GM12878 (cell line): ENCODE measurements at regions of chr19 and their contacts with region 1.

Region 1: DNA sequence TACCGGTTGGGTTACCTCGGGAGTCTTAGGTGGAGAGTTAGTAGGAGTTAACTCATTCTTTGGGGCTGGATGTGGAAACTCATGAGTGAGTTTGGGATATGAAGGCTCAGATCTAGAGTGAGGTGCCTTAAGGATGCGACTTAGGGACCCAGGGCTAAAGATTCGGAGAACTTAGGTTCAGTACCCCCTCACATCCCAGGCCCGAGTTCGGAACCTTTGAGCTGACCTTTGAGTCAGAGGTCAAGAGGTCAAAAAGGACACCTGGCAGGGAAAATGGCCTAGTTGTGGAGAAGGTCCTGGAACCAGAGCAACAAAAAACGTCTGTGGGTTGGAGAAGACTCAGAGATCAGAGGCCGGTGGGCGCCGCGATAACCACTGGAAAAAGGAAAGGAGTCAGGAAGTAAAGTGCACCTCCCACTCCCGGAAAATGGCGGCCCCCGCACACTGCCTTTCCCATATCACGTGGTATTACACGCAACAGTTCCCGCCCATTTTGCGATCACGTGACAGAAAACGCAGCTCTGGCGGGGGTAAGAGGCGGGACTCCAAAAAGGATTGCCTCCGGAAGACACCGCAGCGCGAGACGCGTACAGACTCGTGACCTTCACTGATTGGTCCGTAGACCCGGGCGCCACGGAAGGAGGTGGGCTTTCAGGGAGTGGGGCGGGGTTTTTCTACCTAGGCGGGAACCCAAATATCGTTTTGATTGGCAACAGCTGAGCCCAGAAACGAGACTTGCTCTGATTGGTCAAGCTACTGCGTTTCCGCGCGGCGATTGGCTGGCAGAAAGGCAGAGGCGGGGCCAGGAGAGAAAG is at the start of gene ACTMAP:
- DNase-seq: peak; percentile 99
- ATAC-seq: peak; percentile 88
- H3K4me3 ChIP-seq: peak within 1 kb of the TSS; percentile 94
- H3K27ac ChIP-seq: peak within 1 kb of the TSS; percentile 98
- H3K4me1 ChIP-seq: peaks cover 16% of the 10 kb centered on the region
- H3K27me3 ChIP-seq: no peaks in the 10 kb centered on the region
- CTCF ChIP-seq: no peak
- EP300 ChIP-seq: peak in 1 of 2 experiments; percentile 55; a peak in 1 of 4 replicates
- POLR2A ChIP-seq: peak; percentile 57; the same call in 1 of the 2 replicates
- RAD21 ChIP-seq: no peak
- polyA plus RNA-seq, gene ACTMAP: 4.7 to 8.2 TPM

Region 2: DNA sequence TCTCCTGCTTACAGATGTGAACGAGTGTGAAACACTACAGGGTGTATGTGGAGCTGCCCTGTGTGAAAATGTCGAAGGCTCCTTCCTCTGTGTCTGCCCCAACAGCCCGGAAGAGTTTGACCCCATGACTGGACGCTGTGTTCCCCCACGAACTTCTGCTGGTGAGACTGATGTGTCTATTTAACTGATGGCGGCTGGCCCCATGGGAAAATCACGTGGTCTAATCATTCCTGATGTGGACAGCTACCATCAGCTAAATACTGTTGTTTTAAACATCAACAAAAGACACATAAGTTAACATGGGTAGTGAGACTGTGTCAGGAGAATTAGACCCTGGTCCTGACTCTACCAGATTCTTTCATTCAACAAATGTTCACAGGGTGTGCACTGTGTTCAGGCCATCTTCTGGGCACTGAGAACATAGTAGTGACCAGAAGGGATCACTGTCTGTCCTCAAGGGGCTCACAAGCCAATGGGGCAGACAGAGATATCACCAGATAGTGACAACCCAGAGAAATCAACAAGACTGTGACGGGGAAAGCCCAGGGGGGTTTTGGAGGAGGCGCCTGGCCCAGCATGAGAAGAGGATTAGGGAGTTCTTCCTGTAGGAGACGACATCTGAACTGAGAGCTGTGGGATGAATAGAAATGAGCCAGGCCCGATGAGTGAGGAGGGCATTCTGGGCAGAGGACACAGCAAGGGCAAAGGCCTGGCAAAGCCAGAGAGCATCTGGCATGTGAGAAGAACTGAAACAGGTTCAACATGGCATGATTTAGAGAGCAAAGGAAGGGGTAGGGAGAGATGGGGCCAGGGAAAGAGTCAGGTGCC is 130.7 kb before region 1 on chr19:
- CTCF ChIA-PET with region 1: no interaction called
- POLR2A ChIA-PET with region 1: no interaction called
- RAD21 ChIA-PET with region 1: no interaction called
- SMC1A ChIA-PET with region 1: no interaction called
- in situ Hi-C with region 1: no loop called
- intact Hi-C with region 1: no loop called
- DNase-seq: no peak
- ATAC-seq: peak; percentile 80
- H3K4me3 ChIP-seq: no peak overlapping the region
- H3K27ac ChIP-seq: peak overlapping the region; percentile 48
- H3K4me1 ChIP-seq: peaks cover 4% of the 10 kb centered on the region; the same call in 1 of the 2 replicates
- H3K27me3 ChIP-seq: no peaks in the 10 kb centered on the region
- CTCF ChIP-seq: no peak
- EP300 ChIP-seq: no peak
- POLR2A ChIP-seq: no peak
- RAD21 ChIP-seq: no peak

Region 3: DNA sequence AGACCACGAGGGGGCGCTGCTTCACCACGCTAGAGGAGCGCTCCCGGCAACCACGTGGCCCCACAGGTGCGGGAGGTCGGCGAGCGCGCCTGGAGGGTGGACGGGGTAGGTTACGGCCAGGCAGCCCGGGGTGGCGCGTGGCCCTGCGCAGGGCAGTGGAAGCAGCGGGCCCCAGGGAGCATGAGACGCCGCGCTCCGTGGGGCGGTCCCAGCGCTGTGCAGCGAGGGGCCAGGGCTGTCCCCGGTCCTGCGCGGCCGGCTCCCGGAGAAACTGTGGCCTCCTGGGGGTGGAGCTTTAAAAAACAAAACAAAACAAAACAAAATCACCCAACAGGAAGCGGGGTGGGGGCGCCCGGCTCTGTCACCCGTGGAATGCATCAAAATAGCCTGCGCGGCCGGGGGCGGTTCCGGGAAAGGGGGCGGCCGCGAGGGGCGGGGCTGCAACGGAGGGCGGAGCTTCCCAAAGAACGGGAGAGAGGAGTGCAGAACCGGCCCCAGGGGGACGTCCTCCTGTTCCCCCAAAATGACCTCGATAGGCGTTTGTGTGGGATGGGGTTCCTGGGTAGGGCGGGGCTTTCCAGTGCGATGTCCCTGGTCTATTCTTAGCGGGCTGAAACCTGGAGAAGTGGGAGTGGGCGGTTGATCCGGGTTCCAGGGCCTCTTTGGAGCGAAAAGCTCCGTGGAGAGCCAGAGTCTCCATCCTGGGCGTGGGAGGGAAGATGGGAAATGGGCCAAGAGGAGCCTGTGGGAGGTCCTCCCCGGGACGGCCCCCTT is 87.2 kb before region 1 on chr19:
- CTCF ChIA-PET with region 1: interaction called, 5 read pairs
- POLR2A ChIA-PET with region 1: interaction called, 4 read pairs
- RAD21 ChIA-PET with region 1: interaction called, 11 read pairs
- SMC1A ChIA-PET with region 1: interaction called, 6 read pairs
- in situ Hi-C with region 1: no loop called
- intact Hi-C with region 1: loop called (anchors 5 kb)
- DNase-seq: peak; percentile 24
- ATAC-seq: peak; percentile 97
- H3K4me3 ChIP-seq: peak overlapping the region; percentile 83
- H3K27ac ChIP-seq: no peak overlapping the region
- H3K4me1 ChIP-seq: peaks cover 6% of the 10 kb centered on the region
- H3K27me3 ChIP-seq: no peaks in the 10 kb centered on the region
- CTCF ChIP-seq: peak in 2 of 3 experiments; percentile 94 to 95; a peak in 5 of 6 replicates
- EP300 ChIP-seq: no peak
- POLR2A ChIP-seq: peak; percentile 68
- RAD21 ChIP-seq: peak; percentile 90

Region 4: DNA sequence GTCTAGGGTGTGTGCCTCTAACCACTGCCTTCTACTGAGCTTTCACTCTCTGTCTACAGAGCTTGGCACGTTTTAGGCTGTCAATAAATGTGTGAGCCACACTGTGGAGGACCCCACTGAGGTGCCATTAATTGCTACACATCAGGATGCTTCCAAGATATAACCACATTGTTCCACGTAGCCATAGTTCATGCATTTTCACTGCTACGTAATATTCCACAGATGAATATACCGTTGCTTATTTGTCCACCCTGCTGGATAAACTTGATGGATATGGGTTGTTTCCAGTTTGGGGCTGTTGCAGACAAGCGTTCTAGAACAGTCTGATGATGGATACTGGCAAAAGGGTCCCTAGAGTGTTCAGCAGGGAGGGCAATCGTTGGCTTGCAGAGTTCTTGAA is 48.5 kb before region 1 on chr19:
- CTCF ChIA-PET with region 1: no interaction called
- POLR2A ChIA-PET with region 1: interaction called, 11 read pairs
- RAD21 ChIA-PET with region 1: no interaction called
- SMC1A ChIA-PET with region 1: no interaction called
- in situ Hi-C with region 1: no loop called
- intact Hi-C with region 1: no loop called
- DNase-seq: no peak
- ATAC-seq: no peak
- H3K4me3 ChIP-seq: no peak overlapping the region
- H3K27ac ChIP-seq: no peak overlapping the region
- H3K4me1 ChIP-seq: no peaks in the 10 kb centered on the region
- H3K27me3 ChIP-seq: no peaks in the 10 kb centered on the region
- CTCF ChIP-seq: no peak
- EP300 ChIP-seq: no peak
- POLR2A ChIP-seq: no peak
- RAD21 ChIP-seq: no peak

Region 5: DNA sequence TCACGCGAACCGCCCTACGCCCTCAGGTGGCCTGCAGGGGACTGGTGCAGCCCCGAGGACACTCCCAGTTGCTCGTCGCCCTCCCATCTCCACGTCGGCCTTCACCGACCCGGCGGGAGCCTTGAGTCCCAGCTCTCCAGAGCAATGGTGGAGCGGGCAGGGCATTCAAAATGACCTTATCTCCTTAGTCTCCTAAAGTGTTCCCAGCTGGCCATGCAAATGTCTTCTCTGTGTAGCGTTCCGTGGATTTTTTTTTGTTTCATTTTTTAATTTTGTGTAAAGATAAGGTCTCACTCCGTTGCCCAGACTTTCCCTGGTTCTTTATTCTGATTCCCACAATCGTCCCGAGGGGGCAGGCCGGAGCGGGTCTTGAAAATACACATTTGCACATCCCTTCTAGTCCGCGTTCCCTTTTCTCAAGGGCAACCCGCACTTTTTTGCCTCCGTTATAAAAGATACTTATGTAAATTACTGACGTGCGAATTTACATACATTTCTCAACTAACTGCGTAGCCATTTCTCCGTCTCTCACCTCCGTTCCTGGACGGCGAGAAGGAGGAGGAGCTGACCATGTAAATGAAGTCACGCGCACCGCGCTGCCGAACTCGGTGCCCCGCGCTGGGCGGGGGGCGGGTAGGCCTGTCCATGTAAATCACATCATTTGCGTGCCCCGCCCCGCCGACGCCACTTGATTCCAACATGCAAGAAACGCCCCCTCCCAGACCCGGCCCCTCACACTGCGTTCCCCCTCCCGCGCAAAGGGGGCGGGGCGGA is 48.1 kb after region 1 on chr19:
- CTCF ChIA-PET with region 1: interaction called, 13 read pairs
- POLR2A ChIA-PET with region 1: interaction called, 19 read pairs
- RAD21 ChIA-PET with region 1: interaction called, 20 read pairs
- SMC1A ChIA-PET with region 1: interaction called, 21 read pairs
- in situ Hi-C with region 1: no loop called
- intact Hi-C with region 1: loop called (anchors 1 kb)
- DNase-seq: peak; percentile 97
- ATAC-seq: peak; percentile 91
- H3K4me3 ChIP-seq: peak overlapping the region; percentile 66
- H3K27ac ChIP-seq: peak overlapping the region; percentile 68
- H3K4me1 ChIP-seq: peaks cover 38% of the 10 kb centered on the region
- H3K27me3 ChIP-seq: no peaks in the 10 kb centered on the region
- CTCF ChIP-seq: peak; percentile 46 to 53 (median 48); a peak in 5 of 6 replicates
- EP300 ChIP-seq: 0 out of 4 replicates have a peak, but pooled peaks of 1 of the 2 experiments have one; percentile 31
- POLR2A ChIP-seq: peak; percentile 67
- RAD21 ChIP-seq: peak; percentile 42; the same call in 1 of the 2 replicates

Region 6: GRCh38 chr19:40822161-40822560 is 71.9 kb after region 1 on chr19:
- CTCF ChIA-PET with region 1: interaction called, 26 read pairs
- POLR2A ChIA-PET with region 1: interaction called, 4 read pairs
- RAD21 ChIA-PET with region 1: interaction called, 10 read pairs
- SMC1A ChIA-PET with region 1: interaction called, 7 read pairs
- in situ Hi-C with region 1: no loop called
- intact Hi-C with region 1: no loop called
- DNase-seq: no peak
- ATAC-seq: no peak
- H3K4me3 ChIP-seq: no peak overlapping the region
- H3K27ac ChIP-seq: no peak overlapping the region
- H3K4me1 ChIP-seq: peaks cover 11% of the 10 kb centered on the region
- H3K27me3 ChIP-seq: no peaks in the 10 kb centered on the region
- CTCF ChIP-seq: no peak
- EP300 ChIP-seq: no peak
- POLR2A ChIP-seq: no peak
- RAD21 ChIP-seq: no peak

Region 7: GRCh38 chr19:40872209-40872608 is 121.9 kb after region 1 on chr19:
- CTCF ChIA-PET with region 1: no interaction called
- POLR2A ChIA-PET with region 1: no interaction called
- RAD21 ChIA-PET with region 1: no interaction called
- SMC1A ChIA-PET with region 1: no interaction called
- in situ Hi-C with region 1: no loop called
- intact Hi-C with region 1: no loop called
- DNase-seq: no peak
- ATAC-seq: no peak
- H3K4me3 ChIP-seq: no peak overlapping the region
- H3K27ac ChIP-seq: no peak overlapping the region
- H3K4me1 ChIP-seq: no peaks in the 10 kb centered on the region
- H3K27me3 ChIP-seq: no peaks in the 10 kb centered on the region; a peak in 1 of 4 replicates
- CTCF ChIP-seq: no peak
- EP300 ChIP-seq: no peak
- POLR2A ChIP-seq: no peak
- RAD21 ChIP-seq: no peak